ENCODE measurements at regions of chr1 and their contacts with region 1.

Region 1: GRCh38 chr1:161225534-161226319 is at the start of gene TOMM40L:
- DNase-seq: peak; percentile 97
- H3K4me3 Mint-ChIP-seq: peak within 1 kb of the TSS; percentile 99
- H3K27ac Mint-ChIP-seq: peak within 1 kb of the TSS; percentile 99
- H3K4me1 Mint-ChIP-seq: peaks cover 31% of the 10 kb centered on the region
- H3K27me3 Mint-ChIP-seq: no peaks in the 10 kb centered on the region
- total RNA-seq, gene TOMM40L: 25.6 and 28.4 TPM in 2 replicates

Region 2: DNA sequence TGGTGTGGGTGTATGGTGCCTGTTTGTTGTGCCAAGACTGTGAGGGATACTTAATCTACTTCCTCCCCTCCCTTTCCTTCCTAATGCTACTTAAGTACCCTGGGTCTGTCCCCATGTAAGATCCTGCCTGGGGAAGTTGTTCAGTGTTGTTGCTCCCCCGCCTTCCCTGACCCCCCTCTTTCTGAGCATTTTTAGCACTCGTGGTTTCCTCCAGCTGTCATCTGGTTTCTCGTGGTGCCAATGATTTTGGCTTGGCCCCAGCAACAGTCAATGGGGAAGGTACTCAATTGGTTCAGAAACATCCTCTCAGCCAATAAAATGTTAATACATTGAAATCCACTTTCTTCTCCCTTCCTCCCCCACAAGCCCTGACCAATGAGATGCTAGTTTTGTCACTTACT is 40.4 kb before region 1 on chr1:
- intact Hi-C with region 1: loop called (anchors 1 kb)
- DNase-seq: peak; percentile 94
- H3K4me3 Mint-ChIP-seq: peak overlapping the region; percentile 75
- H3K27ac Mint-ChIP-seq: peak overlapping the region; percentile 96
- H3K4me1 Mint-ChIP-seq: peaks cover 69% of the 10 kb centered on the region
- H3K27me3 Mint-ChIP-seq: no peaks in the 10 kb centered on the region

Region 3: GRCh38 chr1:161201828-161202725 is 23.6 kb before region 1 on chr1 and contains the start of gene NDUFS2:
- intact Hi-C with region 1: loop called (anchors 1 kb)
- DNase-seq: peak; percentile 98
- H3K4me3 Mint-ChIP-seq: peak within 1 kb of the TSS; percentile 94
- H3K27ac Mint-ChIP-seq: peak within 1 kb of the TSS; percentile 96
- H3K4me1 Mint-ChIP-seq: peaks cover 61% of the 10 kb centered on the region
- H3K27me3 Mint-ChIP-seq: no peaks in the 10 kb centered on the region
- total RNA-seq, gene NDUFS2: 88.4 and 89.6 TPM in 2 replicates

Region 4: DNA sequence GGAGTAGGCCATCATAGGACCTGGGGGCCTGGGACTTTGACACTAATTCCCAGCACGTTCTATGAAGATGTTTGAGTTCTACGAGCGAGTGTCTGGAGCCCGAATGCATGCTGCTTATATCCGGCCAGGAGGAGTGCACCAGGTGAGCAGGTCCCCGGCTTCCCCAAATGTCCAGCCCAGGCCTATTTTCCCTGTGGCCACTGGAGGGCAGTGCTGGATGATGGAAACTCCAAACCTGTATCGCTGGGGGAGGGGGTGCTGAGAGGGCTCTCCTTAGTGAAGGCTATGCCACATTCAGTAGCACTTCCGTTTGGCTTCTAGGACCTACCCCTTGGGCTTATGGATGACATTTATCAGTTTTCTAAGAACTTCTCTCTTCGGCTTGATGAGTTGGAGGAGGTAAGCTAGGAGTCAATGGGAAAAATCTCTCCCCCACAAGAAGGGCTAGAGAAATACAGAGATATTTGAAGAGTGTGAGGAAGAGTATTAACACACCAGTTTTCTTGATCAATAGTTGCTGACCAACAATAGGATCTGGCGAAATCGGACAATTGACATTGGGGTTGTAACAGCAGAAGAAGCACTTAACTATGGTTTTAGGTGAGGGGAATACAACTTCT is 15.8 kb before region 1 on chr1:
- intact Hi-C with region 1: loop called (anchors 2 kb)
- DNase-seq: peak; percentile 92
- H3K4me3 Mint-ChIP-seq: no peak overlapping the region
- H3K27ac Mint-ChIP-seq: no peak overlapping the region
- H3K4me1 Mint-ChIP-seq: peaks cover 34% of the 10 kb centered on the region
- H3K27me3 Mint-ChIP-seq: no peaks in the 10 kb centered on the region

Region 5: DNA sequence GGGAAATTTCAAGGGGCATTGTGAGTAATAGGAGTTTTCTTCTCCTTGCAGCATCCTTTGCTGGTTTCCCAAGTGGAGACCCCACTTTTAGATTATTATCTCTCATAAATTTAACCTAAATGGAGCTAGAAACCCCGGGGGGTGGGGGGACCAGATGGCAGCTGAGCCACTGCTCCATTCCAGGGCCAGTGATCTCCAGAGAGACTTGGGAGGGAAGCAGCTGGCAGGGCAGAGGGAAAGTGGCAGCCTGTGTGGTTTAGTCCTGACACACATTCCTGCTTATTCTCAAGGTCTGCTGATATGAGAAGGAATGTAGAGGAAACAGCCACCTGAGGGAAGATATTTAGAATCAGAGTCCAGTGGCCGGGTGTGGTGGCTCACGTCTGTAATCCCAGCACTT is 49.1 kb after region 1 on chr1:
- intact Hi-C with region 1: no loop called
- DNase-seq: no peak
- H3K4me3 Mint-ChIP-seq: no peak overlapping the region
- H3K27ac Mint-ChIP-seq: no peak overlapping the region
- H3K4me1 Mint-ChIP-seq: no peaks in the 10 kb centered on the region
- H3K27me3 Mint-ChIP-seq: peaks cover 31% of the 10 kb centered on the region

Region 6: DNA sequence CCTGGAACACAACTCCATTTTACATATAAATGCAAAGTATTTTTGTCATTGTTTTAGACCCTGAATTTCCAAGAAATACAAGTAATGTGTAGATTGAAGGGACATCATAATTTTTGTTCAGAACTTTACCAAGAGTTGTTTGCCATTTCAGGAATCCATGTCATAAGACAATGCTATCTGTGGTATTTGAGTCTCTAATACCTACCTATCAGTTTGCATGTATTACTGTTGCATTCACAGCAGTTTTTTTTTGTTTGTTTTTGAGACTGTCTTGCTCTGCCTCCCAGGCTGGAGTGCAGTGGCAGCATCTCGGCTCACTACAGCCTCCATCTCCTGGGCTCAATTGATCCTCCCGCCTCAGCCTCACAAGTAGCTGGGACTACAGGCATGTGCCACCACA is 66.9 kb after region 1 on chr1:
- intact Hi-C with region 1: loop called (anchors 1 kb)
- DNase-seq: no peak
- H3K4me3 Mint-ChIP-seq: no peak overlapping the region
- H3K27ac Mint-ChIP-seq: no peak overlapping the region
- H3K4me1 Mint-ChIP-seq: no peaks in the 10 kb centered on the region
- H3K27me3 Mint-ChIP-seq: no peaks in the 10 kb centered on the region

Region 7: DNA sequence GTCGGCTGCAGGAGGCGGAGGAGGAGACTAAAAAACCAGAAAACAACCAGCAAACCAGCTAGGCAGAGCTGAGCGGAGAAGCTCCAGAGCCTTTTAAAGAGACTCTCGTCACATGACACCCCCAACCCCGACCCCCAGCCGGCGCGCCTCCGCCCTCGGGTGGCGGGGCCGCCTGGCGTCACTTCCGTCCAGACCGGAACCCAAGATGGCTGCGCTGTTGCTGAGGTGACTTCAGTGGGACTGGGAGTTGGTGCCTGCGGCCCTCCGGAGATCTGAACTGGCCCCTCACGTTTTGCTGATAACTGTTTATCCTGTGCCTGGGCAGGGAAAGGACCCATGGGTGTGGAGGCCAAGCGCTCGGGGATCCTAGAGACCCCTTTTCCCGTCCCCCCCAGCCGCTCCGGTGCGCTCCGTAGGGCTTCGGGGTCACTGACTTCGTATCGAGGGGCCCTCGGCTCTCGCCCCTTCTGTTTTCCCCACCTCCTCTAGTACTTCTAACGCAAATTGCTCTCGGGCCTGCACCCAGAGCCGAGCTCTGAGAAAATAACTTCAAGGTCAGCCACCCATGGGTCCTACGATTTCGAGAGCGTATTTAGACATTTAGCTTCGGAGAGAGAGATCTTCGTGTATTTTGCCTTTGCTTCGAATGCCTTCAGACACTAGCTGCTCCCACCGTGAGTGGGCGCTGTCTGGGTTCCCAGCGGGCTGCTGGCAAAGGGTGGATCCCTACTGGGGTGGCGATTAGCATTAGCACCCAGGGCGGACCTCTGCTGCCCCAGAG is 88.7 kb after region 1 on chr1 and contains the start of gene SDHC:
- intact Hi-C with region 1: loop called (anchors 2 kb)
- DNase-seq: peak; percentile 97
- H3K4me3 Mint-ChIP-seq: peak within 1 kb of the TSS; percentile 97
- H3K27ac Mint-ChIP-seq: peak within 1 kb of the TSS; percentile 97
- H3K4me1 Mint-ChIP-seq: peaks cover 21% of the 10 kb centered on the region
- H3K27me3 Mint-ChIP-seq: no peaks in the 10 kb centered on the region
- total RNA-seq, gene SDHC: 174 and 182 TPM in 2 replicates

Region 8: DNA sequence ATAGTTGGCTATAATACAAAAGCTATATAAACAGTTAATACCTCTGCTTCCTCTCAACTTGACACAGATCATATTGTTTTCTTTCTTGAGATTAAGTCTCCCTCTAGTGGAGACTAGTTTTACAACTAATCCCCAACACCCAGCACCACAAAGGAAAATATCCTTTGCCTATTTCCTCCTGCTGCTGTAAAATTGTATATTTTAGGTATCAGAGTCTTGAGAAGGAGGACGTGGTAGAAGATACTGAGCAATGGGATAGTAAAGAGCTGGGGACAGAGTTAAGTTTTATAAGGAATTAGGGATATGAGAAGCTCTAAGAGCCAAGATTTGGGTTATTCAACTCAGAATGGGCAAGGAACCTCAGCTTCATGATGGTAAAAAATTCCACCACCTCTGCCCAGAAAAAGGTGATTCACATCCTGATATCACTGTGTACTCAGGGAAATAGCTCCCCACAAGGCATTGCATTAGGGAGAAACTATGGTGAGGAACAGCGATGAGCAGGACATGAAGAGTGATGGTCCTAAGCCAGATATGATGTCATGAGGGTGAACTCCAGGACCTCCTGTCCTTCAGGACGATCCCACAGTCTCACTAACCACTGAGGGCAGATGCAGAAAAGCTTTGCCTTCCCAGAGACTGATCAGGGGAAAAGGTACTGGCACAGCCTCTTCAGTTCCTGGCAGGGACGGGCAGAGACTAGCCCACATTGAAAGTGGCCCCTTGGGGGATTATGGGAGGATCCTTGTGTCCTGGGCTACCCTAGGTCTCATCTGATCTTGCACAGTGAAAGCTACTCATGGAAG is 156.7 kb after region 1 on chr1:
- intact Hi-C with region 1: loop called (anchors 1 kb)
- DNase-seq: no peak
- H3K4me3 Mint-ChIP-seq: no peak overlapping the region
- H3K27ac Mint-ChIP-seq: no peak overlapping the region
- H3K4me1 Mint-ChIP-seq: peaks cover 21% of the 10 kb centered on the region
- H3K27me3 Mint-ChIP-seq: no peaks in the 10 kb centered on the region

Region 9: DNA sequence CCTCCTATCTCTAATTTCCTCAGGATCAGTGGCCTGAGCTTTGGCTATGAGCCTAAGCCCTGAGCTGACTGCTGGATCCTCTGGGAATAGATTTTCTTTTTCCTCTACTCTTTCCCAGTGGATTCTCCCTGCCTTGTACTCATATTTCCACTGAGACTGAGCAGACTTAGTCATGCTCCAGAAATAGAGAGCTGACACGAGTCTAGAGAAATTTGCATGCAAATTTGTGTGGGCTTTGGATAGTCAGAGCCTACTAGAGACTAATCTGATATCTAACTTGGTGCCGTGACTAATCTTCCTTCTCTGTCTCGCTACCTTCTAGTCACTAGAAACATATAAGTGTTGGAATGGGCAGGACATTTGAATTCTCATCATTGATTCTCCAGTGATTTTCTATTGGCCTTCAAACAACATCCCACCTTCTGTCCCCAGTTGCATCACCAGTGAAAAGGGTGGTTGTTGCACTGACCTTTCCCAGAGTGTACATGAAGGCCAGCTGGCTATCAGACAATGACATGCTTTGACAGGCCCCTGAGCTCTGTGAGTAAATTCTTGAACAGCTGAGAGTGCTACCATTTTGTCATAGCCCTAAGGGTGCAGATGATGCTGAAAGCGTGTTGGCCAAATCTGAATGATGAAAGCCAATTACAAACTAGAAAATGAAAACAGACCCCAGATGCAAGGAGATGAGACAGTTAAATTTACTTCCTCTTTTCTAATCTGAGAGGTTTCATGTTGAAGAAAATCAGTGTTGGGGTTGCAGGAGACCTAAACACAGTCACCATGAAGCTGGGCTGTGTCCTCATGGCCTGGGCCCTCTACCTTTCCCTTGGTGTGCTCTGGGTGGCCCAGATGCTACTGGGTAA is 481.0 kb after region 1 on chr1 and contains the start of gene FCRLA:
- intact Hi-C with region 1: no loop called
- DNase-seq: peak; percentile 37
- H3K4me3 Mint-ChIP-seq: no peak within 1 kb of the TSS
- H3K27ac Mint-ChIP-seq: no peak within 1 kb of the TSS
- H3K4me1 Mint-ChIP-seq: no peaks in the 10 kb centered on the region
- H3K27me3 Mint-ChIP-seq: peaks cover 25% of the 10 kb centered on the region
- total RNA-seq, gene FCRLA: not detected in 2 replicates

Measured in activated CD4-positive, alpha-beta T cell treated with anti-CD3 and anti-CD28 coated beads, Interleukin-2, amount 10 ng/mL, durations not matched to agents 24 days and 14 days (primary cell).